ENCODE measurements at regions of chr13 and their contacts with region 1.

Region 1: DNA sequence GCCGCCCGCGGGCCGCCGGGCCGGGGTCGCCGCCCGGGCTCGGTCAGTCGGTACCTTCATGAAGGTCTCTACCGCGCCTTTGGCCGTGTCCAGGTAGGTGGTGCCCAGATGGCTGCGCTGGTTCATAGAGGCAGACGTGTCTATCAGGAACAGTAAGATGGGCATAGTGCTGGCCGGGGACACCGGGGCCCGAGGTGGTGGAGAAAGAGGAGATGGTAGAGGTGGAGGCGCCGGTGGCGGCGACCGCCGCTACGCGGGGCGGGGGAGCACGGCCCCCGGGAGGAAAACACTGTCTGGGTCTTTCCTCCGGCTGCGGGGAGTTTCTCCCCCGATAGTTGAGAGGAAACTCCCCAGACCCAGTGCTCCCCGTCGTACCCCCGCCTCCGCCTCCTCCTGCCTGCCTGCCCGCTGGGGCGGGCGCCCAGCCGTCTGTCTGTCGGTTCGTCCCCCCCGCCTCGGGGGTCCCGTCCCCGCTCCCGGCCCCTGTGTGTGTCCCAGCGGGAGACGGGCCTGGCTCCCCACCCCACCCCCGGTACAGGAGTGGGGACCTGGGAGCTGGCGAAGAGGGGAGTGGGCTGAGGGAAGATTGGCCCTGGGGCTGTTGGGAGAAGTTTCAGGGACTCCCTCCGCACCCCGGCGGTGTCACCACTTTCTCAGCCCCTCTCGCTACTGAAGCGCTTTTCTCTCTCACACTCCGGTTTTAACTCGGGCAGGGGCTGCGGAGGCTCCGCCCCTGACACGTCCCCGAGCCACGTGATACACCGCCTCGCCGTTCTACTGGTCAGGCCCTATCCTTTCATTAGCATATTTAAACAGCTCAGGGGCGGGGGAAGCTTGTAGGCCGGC is at the start of gene INTS6:
- DNase-seq: peak; percentile 99 to 100
- H3K4me3 ChIP-seq: peak within 1 kb of the TSS; percentile 96 to 98 (median 97)
- H3K27ac ChIP-seq: peak within 1 kb of the TSS; percentile 100
- H3K4me1 ChIP-seq: peaks cover 0 to 3% of the 10 kb centered on the region in 2 donors
- H3K27me3 ChIP-seq: no peaks in the 10 kb centered on the region
- CTCF ChIP-seq: no peak
- POLR2A ChIP-seq: peak; percentile 100
- total RNA-seq, gene INTS6: 31.2 to 76.7 (median 50.5) TPM

Region 2: GRCh38 chr13:51025245-51025905 is 427.2 kb before region 1 on chr13:
- intact Hi-C with region 1: no loop called
- DNase-seq: no peak
- H3K4me3 ChIP-seq: no peak overlapping the region
- H3K27ac ChIP-seq: no peak overlapping the region
- H3K4me1 ChIP-seq: no peaks in the 10 kb centered on the region
- H3K27me3 ChIP-seq: no peaks in the 10 kb centered on the region
- CTCF ChIP-seq: no peak
- POLR2A ChIP-seq: no peak

Region 3: DNA sequence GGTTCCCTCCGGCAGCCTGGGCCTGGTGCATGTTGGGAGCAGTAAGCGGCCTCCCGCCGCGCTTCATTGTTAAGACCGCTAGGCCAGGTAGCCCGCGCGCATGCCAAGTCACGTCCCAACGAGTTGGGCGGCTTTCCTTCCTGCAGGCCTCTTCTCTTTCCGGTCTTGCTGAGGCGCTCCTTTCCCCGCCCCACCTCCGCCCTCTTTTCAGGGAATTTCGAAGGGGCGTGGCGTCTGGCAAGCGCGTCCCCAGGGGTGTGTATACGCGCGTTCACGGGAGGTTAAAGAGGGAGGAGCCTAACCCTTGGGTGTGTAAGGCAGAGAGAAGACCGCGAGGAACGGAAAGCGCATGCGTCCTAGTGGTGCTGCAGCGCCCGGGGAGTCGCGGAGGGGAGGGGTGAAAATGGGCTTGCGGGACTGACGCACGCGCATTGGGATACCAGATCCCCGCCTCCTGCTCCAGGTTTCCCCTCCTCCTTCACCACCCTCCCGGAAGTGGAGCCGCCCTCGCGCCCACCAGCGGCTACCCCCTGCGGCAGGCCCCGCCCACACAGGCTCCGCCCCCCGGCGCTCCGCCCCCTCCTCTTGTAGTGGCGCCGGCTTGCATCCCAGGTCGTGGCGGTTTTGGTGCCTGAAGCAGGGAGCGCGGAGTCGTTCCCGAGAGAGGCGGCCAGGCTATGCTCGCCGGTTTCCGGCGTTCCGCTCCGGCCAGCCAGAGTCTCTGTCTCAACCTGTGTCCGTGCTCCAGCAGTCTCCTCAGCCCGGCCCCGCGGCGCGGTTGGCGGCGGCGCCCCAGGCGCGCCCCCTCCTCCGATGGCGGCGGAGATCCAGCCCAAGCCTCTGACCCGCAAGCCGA is 131.5 kb after region 1 on chr13 and contains the start of gene WDFY2:
- intact Hi-C with region 1: loop called (anchors 10 kb)
- DNase-seq: peak; percentile 99 to 100
- H3K4me3 ChIP-seq: peak within 1 kb of the TSS; percentile 80 to 86 (median 84)
- H3K27ac ChIP-seq: peak within 1 kb of the TSS; percentile 92 to 94
- H3K4me1 ChIP-seq: no peaks in the 10 kb centered on the region
- H3K27me3 ChIP-seq: no peaks in the 10 kb centered on the region
- CTCF ChIP-seq: peak in 2 of 3 donors; percentile 19 to 31
- POLR2A ChIP-seq: peak; percentile 86
- total RNA-seq, gene WDFY2: 21.0 to 27.7 (median 21.4) TPM

Region 4: GRCh38 chr13:51803422-51804294 is 351.1 kb after region 1 on chr13 and contains the start of gene DHRS12:
- intact Hi-C with region 1: loop called (anchors 10 kb)
- DNase-seq: peak; percentile 91 to 92
- H3K4me3 ChIP-seq: peak within 1 kb of the TSS; percentile 58 to 90 (median 88)
- H3K27ac ChIP-seq: peak within 1 kb of the TSS; percentile 100
- H3K4me1 ChIP-seq: peaks cover 6 to 19% of the 10 kb centered on the region in 2 donors
- H3K27me3 ChIP-seq: no peaks in the 10 kb centered on the region
- CTCF ChIP-seq: peak in 1 of 3 donors; percentile 23
- POLR2A ChIP-seq: peak; percentile 18
- total RNA-seq, gene DHRS12: 16.2 to 35.7 (median 16.4) TPM

Measured in breast epithelium (tissue), 4 donors.